ENCODE measurements at regions of chr4 and their contacts with region 1.

Region 1: GRCh38 chr4:47650584-47651130 is 165.6 kb downstream of the ATP10D start:
- DNase-seq: no peak
- H3K4me3 ChIP-seq: no peak overlapping the region
- H3K27ac ChIP-seq: no peak overlapping the region
- H3K4me1 ChIP-seq: no peaks in the 10 kb centered on the region
- H3K27me3 ChIP-seq: peaks cover 2% of the 10 kb centered on the region
- CTCF ChIP-seq: no peak

Region 2: GRCh38 chr4:47490550-47490949 is 160.1 kb before region 1 on chr4:
- CTCF ChIA-PET with region 1: no interaction called
- dilution Hi-C with region 1: loop called (anchors 10 kb)
- in situ Hi-C with region 1: no loop called
- intact Hi-C with region 1: no loop called
- DNase-seq: peak; percentile 34
- H3K4me3 ChIP-seq: no peak overlapping the region
- H3K27ac ChIP-seq: no peak overlapping the region
- H3K4me1 ChIP-seq: no peaks in the 10 kb centered on the region
- H3K27me3 ChIP-seq: no peaks in the 10 kb centered on the region
- CTCF ChIP-seq: peak; percentile 54 to 67

Region 3: GRCh38 chr4:47704693-47705325 is 54.2 kb after region 1 on chr4:
- CTCF ChIA-PET with region 1: no interaction called
- dilution Hi-C with region 1: no loop called
- in situ Hi-C with region 1: no loop called
- intact Hi-C with region 1: no loop called
- DNase-seq: no peak
- H3K4me3 ChIP-seq: no peak overlapping the region
- H3K27ac ChIP-seq: no peak overlapping the region
- H3K4me1 ChIP-seq: no peaks in the 10 kb centered on the region
- H3K27me3 ChIP-seq: peaks cover 2% of the 10 kb centered on the region
- CTCF ChIP-seq: peak in 1 of 2 donors; percentile 28

Measured in mammary epithelial cell (primary cell).